Activated CD8-positive, alpha-beta T cell treated with anti-CD3 and anti-CD28 coated beads for 36 hours (primary cell): ENCODE measurements at regions of chr1 and their contacts with region 1.

Region 1: GRCh38 chr1:44721485-44722361 is 9.2 kb downstream of the RNU5D-1 start:
- DNase-seq: peak; percentile 95
- ATAC-seq: peak; percentile 78
- H3K4me3 Mint-ChIP-seq: peak overlapping the region; percentile 72
- H3K27ac Mint-ChIP-seq: peak overlapping the region; percentile 92
- H3K4me1 Mint-ChIP-seq: peaks cover 74% of the 10 kb centered on the region
- H3K27me3 Mint-ChIP-seq: peaks cover 4% of the 10 kb centered on the region
- CTCF ChIP-seq: no peak

Region 2: GRCh38 chr1:44664730-44665370 is 56.9 kb before region 1 on chr1:
- CTCF ChIA-PET with region 1: interaction called, 3 read pairs
- POLR2A ChIA-PET with region 1: interaction called, 11 read pairs
- intact Hi-C with region 1: no loop called
- DNase-seq: peak; percentile 72
- ATAC-seq: peak; percentile 94
- H3K4me3 Mint-ChIP-seq: peak overlapping the region; percentile 7
- H3K27ac Mint-ChIP-seq: peak overlapping the region; percentile 39
- H3K4me1 Mint-ChIP-seq: peaks cover 15% of the 10 kb centered on the region
- H3K27me3 Mint-ChIP-seq: no peaks in the 10 kb centered on the region
- CTCF ChIP-seq: no peak

Region 3: DNA sequence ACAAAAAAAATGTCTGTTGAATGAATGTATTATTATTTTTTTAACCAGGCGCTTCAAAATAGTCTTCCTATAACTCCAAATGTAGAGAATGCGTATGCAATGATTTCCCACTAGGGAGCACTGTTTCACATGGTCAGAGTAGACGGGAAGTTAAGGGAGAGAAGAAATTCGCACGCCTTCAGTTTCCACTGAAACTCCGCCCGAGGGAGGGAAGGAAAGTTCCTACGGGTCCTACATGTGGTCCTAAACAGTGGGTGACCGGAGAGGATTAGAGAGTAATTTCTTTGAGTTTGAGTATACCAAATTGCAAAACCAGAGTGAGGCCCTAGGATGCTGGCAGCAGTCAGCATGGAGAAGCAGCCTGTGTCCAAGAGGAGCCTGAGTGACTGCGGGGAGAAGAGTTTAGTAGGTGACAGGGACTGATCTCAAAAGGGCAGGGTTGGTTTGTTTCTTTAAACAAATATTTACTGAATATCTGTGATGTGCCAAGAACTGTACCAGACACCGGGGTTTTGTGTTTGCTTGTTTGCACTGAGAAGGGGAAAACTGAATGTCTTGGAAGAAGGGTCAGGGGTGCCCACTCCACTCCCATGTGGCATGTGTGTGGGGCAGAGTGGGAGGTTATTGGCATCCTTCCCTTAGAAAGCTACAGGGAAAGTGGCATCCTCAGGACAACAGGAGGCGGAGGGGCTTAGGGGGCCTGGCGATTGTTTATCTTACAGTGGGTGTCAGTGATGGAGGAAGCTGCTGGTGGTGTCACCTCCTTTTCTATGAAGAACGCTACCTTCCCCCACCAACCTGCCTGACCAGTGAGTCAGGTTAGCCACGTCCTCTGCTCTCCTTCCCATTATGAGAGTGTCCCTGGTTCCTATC is 13.5 kb before region 1 on chr1:
- CTCF ChIA-PET with region 1: interaction called, 17 read pairs
- POLR2A ChIA-PET with region 1: interaction called, 77 read pairs
- intact Hi-C with region 1: no loop called
- DNase-seq: peak; percentile 18
- ATAC-seq: peak; percentile 79
- H3K4me3 Mint-ChIP-seq: peak overlapping the region; percentile 42
- H3K27ac Mint-ChIP-seq: peak overlapping the region; percentile 40
- H3K4me1 Mint-ChIP-seq: peaks cover 13% of the 10 kb centered on the region
- H3K27me3 Mint-ChIP-seq: no peaks in the 10 kb centered on the region
- CTCF ChIP-seq: peak; percentile 87

Region 4: DNA sequence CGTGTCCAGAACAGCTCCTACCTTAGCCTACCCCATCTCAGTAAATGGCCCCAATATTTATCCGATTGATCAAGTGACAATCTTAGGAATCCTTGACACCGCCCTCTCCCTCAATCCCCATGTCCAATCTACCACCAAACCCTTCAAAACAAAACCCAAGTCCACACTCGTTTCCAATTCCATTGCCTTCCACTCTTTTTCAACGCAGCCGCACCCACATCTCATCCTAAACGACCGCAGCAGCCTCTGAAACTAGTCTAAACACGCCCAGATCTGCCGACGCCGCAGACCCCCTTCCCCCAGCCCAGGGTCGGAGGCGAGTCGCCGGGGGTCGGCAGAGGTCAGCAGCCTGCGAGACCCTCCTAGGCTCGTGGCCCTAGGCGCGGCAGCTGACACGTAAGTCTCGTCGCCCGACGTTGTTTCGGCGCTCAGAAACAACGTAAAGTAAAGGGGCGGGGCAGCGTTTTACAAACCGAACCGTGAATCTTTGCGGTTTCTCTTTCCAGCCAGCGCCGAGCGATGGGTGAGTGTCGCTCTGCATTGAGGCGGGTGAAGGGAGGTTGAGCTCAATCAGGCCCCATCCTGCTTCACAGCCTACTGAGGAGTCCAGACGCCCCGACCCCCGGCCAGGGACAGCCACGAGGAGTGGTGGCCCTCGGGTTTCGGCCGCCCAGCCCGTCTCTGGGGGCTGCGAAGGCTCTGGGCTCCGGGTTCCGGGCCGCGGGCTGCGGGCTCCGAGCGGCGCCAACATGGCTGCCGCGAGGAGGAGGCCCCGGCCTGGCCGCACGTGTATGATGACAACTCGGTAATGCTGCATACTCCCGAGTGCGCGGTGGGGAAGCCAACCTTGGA is 53.6 kb after region 1 on chr1 and contains the start of gene RPS8:
- CTCF ChIA-PET with region 1: no interaction called
- POLR2A ChIA-PET with region 1: interaction called, 108 read pairs
- intact Hi-C with region 1: no loop called
- DNase-seq: peak; percentile 95
- ATAC-seq: peak; percentile 79
- H3K4me3 Mint-ChIP-seq: peak within 1 kb of the TSS; percentile 91
- H3K27ac Mint-ChIP-seq: peak within 1 kb of the TSS; percentile 96
- H3K4me1 Mint-ChIP-seq: peaks cover 35% of the 10 kb centered on the region
- H3K27me3 Mint-ChIP-seq: no peaks in the 10 kb centered on the region
- CTCF ChIP-seq: no peak
- total RNA-seq, gene RPS8: 3,218 to 3,314 TPM

Region 5: GRCh38 chr1:44799770-44800584 is 78.3 kb after region 1 on chr1 and contains the start of gene PLK3:
- CTCF ChIA-PET with region 1: no interaction called
- POLR2A ChIA-PET with region 1: interaction called, 213 read pairs
- intact Hi-C with region 1: no loop called
- DNase-seq: peak; percentile 99
- ATAC-seq: peak; percentile 90
- H3K4me3 Mint-ChIP-seq: peak within 1 kb of the TSS; percentile 84
- H3K27ac Mint-ChIP-seq: peak within 1 kb of the TSS; percentile 100
- H3K4me1 Mint-ChIP-seq: peaks cover 35% of the 10 kb centered on the region
- H3K27me3 Mint-ChIP-seq: no peaks in the 10 kb centered on the region
- CTCF ChIP-seq: peak; percentile 76
- total RNA-seq, gene PLK3: 36.4 to 36.6 TPM

Region 6: GRCh38 chr1:44827197-44828002 is 105.7 kb after region 1 on chr1:
- CTCF ChIA-PET with region 1: no interaction called
- POLR2A ChIA-PET with region 1: interaction called, 466 read pairs
- intact Hi-C with region 1: no loop called
- DNase-seq: no peak
- ATAC-seq: peak; percentile 34
- H3K4me3 Mint-ChIP-seq: no peak overlapping the region
- H3K27ac Mint-ChIP-seq: no peak overlapping the region
- H3K4me1 Mint-ChIP-seq: peaks cover 2% of the 10 kb centered on the region
- H3K27me3 Mint-ChIP-seq: no peaks in the 10 kb centered on the region
- CTCF ChIP-seq: no peak

Region 7: DNA sequence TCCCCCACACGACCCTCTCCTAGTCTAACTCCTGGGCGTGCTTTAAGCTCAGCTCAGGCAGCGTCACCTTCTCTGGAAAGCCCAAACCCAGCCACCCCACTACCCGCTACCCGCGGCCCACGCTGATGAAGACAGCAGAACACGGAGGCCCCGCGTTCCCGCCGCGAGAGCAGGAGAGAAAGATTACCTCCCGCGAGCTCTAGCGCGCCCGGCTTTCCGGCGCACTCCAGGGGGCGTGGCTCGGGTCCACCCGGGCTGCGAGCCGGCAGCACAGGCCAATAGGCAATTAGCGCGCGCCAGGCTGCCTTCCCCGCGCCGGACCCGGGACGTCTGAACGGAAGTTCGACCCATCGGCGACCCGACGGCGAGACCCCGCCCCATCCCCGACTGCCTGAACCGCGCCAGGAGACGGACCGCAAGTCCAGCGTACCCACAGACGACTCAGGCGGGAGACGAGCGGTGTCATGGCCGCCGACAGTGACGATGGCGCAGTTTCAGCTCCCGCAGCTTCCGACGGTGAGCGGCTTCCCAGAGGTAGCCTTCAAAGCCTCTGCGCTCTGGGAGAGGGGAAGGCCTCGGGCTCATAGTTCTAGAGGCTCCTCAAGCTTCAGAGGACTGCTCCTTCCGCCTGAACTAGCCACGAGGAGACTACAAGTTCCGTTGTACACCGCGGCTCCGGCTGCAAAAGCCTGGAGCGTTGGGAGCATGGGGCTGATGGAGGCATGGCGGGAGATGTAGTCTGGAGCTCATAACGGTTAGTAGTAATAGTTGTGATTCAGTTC is 618.3 kb after region 1 on chr1 and contains the starts of genes MUTYH and TOE1:
- CTCF ChIA-PET with region 1: no interaction called
- POLR2A ChIA-PET with region 1: interaction called, 18 read pairs
- intact Hi-C with region 1: no loop called
- DNase-seq: peak; percentile 97
- ATAC-seq: peak; percentile 87
- H3K4me3 Mint-ChIP-seq: peak within 1 kb of the TSS; percentile 99
- H3K27ac Mint-ChIP-seq: peak within 1 kb of the TSS; percentile 99
- H3K4me1 Mint-ChIP-seq: peaks cover 37% of the 10 kb centered on the region
- H3K27me3 Mint-ChIP-seq: no peaks in the 10 kb centered on the region
- CTCF ChIP-seq: no peak
- total RNA-seq, gene MUTYH: 51.4 to 54.5 TPM
- total RNA-seq, gene TOE1: 25.7 to 28.1 TPM